ENCODE measurements at regions of chr5 and their contacts with region 1.

Region 1: GRCh38 chr5:88729084-88729828 is 153.7 kb downstream of the MEF2C start:
- DNase-seq: peak in 1 of 2 donors; percentile 55
- ATAC-seq: peak; percentile 83
- H3K4me3 ChIP-seq: no peak overlapping the region
- H3K27ac ChIP-seq: peak overlapping the region in 1 of 2 donors; percentile 14
- H3K4me1 ChIP-seq: peaks cover 3 to 4% of the 10 kb centered on the region in 2 donors
- H3K27me3 ChIP-seq: no peaks in the 10 kb centered on the region

Region 2: DNA sequence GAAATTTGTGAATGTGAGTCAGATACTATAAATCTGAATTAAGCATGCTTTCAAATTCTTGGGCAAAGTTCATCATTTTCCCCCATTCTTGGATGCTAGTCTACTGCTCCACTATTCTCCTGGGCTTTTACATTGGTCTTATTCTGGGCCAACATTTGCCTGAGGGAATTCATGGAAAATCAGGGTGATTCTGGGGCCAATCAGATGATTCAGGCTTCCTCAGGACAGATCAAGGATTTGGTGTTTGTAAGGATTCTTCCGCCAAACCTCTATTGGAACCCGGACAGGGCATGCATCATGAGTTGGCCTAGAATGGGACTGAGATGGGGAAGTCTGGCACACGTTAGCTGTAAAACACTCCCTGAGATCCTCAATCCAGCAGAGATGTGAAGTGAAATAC is 39.9 kb after region 1 on chr5:
- intact Hi-C with region 1: loop called in 1 of 2 experiments (anchors 5 kb)
- DNase-seq: peak in 1 of 2 donors; percentile 65
- ATAC-seq: peak; percentile 82
- H3K4me3 ChIP-seq: no peak overlapping the region
- H3K27ac ChIP-seq: peak overlapping the region in 1 of 2 donors; percentile 51
- H3K4me1 ChIP-seq: peaks cover 0 to 4% of the 10 kb centered on the region in 2 donors
- H3K27me3 ChIP-seq: no peaks in the 10 kb centered on the region

Region 3: DNA sequence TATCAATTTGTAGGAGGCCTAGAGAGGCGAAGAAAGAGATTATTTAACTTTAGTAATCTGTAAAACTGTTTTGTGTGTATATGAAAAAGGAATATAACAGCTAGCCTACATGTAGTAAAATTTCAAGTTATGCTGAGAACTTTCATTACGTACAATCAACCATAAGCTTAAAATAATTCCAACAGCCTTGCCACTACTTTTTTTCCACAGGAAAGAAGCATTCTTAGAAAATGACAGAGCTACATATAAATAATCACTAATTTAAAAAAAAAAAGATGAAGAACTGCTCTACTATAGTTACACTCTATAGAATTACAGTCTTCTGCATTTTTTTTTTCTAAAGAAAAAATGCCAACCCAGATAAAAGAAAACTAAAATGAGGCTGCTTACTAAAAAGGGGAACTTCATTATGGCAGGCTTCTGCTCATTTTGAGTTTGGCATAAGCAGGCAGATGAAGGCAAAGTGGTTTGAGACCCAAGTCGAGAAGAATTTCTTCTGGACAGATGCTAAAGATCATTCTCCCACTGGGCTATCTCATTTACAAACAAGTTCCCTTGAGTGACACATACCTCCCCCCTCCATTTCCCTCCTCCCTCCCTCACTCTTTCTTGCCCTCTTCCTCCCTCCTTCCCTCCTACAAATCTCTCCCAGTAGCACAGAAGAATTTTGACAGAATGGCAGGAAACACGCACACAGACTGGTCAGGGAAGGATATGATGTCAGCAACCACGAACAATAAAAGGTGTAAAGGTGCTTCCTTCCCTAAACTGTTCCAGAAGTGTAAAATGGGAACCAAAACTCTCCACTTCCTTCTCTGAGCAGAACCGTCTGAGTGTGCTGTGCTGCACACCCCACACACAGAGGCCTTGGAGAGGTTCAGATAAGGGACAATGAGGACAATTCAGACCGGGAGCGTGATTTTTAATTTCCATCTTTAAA is 97.7 kb after region 1 on chr5:
- intact Hi-C with region 1: loop called (anchors 5 kb)
- DNase-seq: peak in 1 of 2 donors; percentile 46
- ATAC-seq: peak; percentile 80
- H3K4me3 ChIP-seq: no peak overlapping the region
- H3K27ac ChIP-seq: peak overlapping the region; percentile 62 to 72
- H3K4me1 ChIP-seq: peaks cover 3 to 9% of the 10 kb centered on the region in 2 donors
- H3K27me3 ChIP-seq: no peaks in the 10 kb centered on the region

Region 4: GRCh38 chr5:88883059-88883835 is 154.0 kb after region 1 on chr5 and contains the start of gene MEF2C:
- intact Hi-C with region 1: loop called (anchors 1 to 5 kb)
- DNase-seq: peak; percentile 81 to 92
- ATAC-seq: peak; percentile 90
- H3K4me3 ChIP-seq: peak within 1 kb of the TSS; percentile 100
- H3K27ac ChIP-seq: peak within 1 kb of the TSS; percentile 73 to 99
- H3K4me1 ChIP-seq: peaks cover 0 to 1% of the 10 kb centered on the region in 2 donors
- H3K27me3 ChIP-seq: no peaks in the 10 kb centered on the region
- total RNA-seq, gene MEF2C: 137 to 186 TPM

Region 5: GRCh38 chr5:89081360-89081759 is 352.1 kb after region 1 on chr5:
- intact Hi-C with region 1: loop called (anchors 10 kb)
- DNase-seq: no peak
- ATAC-seq: no peak
- H3K4me3 ChIP-seq: no peak overlapping the region
- H3K27ac ChIP-seq: no peak overlapping the region
- H3K4me1 ChIP-seq: peaks cover 0 to 2% of the 10 kb centered on the region in 2 donors
- H3K27me3 ChIP-seq: no peaks in the 10 kb centered on the region

Region 6: DNA sequence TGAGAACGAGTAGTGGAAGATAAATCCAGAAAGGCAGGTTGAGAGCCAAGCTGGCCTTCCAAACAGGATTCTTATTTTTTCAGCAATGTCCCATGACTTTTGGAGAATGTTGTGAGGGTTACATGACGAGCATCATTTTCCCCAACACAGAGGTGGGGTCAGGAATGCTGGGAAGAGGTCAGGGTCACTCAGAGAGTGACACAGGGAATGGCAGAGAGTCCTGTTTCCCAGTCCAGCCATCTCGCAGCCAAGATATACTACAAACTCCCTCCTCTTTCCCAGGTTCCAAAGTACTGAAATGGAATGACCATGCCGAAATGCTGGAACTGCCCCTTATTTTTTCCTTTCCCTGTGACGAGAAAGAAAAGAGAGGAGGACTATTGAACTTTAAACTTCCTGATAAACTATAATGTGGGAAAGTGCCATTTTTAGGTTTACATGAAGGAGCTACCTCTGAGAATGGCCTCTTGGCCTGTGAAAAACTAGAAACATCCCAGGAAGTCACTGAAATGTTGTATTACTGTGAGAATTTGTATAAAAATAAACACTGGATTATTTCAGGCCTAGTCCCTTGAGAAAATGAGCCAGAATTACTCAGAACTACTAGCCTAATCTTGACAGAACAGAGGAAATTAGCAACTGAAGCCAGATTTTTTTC is 1259.9 kb after region 1 on chr5:
- intact Hi-C with region 1: loop called in 1 of 2 experiments (anchors 2 kb)
- DNase-seq: peak in 1 of 2 donors; percentile 70
- ATAC-seq: peak; percentile 88
- H3K4me3 ChIP-seq: no peak overlapping the region
- H3K27ac ChIP-seq: peak overlapping the region; percentile 89 to 98
- H3K4me1 ChIP-seq: no peaks in the 10 kb centered on the region
- H3K27me3 ChIP-seq: no peaks in the 10 kb centered on the region

Region 7: DNA sequence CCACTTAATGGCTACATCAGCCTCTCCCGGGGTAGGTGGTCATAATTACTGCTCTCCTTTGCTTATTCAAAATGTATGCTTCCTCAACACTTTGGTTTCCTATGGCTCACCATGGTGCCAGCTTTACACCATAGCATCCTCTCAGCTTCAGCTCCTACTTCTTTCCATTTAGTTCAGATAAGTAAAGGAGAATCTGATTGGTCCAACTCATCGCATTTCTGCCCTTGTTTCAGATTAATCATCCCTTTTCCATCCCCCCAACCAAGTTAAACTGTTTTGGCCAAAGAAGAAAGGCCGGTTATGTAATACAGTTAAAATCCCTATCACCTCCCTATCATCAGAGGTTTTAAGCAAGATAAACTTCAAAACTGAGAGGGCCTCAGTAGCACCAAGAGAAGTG is 1549.8 kb after region 1 on chr5:
- intact Hi-C with region 1: loop called in 1 of 2 experiments (anchors 10 kb)
- DNase-seq: no peak
- ATAC-seq: no peak
- H3K4me3 ChIP-seq: no peak overlapping the region
- H3K27ac ChIP-seq: no peak overlapping the region
- H3K4me1 ChIP-seq: peaks cover 0 to 2% of the 10 kb centered on the region in 2 donors
- H3K27me3 ChIP-seq: no peaks in the 10 kb centered on the region